BJ (cell line): ENCODE measurements at regions of chr10 and their contacts with region 1.

Region 1: GRCh38 chr10:70221030-70221429 is 12.2 kb downstream of the PPA1 start:
- DNase-seq: no peak
- H3K4me3 ChIP-seq: no peak overlapping the region
- H3K27me3 ChIP-seq: no peaks in the 10 kb centered on the region
- CTCF ChIP-seq: no peak

Region 2: GRCh38 chr10:70125918-70126552 is 95.0 kb before region 1 on chr10:
- CTCF ChIA-PET with region 1: no interaction called
- POLR2A ChIA-PET with region 1: no interaction called
- DNase-seq: no peak
- H3K4me3 ChIP-seq: no peak overlapping the region
- H3K27me3 ChIP-seq: no peaks in the 10 kb centered on the region
- CTCF ChIP-seq: no peak

Region 3: GRCh38 chr10:70137927-70138883 is 82.8 kb before region 1 on chr10:
- CTCF ChIA-PET with region 1: interaction called, 3 read pairs
- POLR2A ChIA-PET with region 1: interaction called, 16 read pairs
- DNase-seq: no peak
- H3K4me3 ChIP-seq: no peak overlapping the region
- H3K27me3 ChIP-seq: no peaks in the 10 kb centered on the region
- CTCF ChIP-seq: no peak

Region 4: DNA sequence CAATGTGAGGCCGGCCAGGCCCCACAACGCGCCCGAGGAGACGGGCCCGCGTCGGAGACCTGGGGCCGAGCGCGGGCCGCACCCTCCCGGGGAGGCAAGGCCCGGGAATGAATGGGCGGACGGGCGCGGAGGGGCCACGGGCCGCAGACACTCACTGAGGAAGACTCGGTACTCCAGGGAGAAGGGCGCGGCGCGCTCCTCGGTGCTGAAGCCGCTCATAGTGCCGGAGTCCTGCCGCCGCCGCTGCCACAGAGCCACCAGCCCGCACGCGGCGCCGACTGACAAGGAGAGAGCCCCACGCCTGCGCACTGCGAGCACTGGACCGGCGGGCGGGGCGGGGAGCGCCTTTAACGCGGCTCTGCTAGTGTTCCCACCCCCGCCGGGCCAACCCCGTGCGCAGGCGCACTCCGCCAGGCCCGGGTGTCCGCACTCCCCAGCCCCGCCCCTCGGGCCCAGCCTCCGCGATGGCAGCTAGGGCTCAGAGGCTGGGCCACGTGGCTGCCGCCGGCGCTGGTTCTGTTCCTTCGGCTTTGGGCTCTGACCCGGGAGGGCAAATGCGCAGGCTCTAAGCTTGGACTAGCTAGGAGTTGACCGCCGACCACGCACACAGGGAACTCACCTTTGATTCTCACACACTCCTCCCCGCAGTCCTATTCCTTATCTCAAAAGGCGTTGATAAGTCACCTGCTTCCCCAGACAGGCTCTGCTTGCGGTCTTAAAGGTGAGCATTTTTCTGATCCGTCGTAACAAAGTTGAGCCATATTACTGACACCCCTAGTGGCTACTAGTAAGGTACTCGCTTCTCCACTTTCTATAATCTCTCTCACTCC is 12.3 kb after region 1 on chr10 and contains the start of gene PPA1:
- CTCF ChIA-PET with region 1: interaction called, 19 read pairs
- POLR2A ChIA-PET with region 1: no interaction called
- DNase-seq: peak; percentile 69
- H3K4me3 ChIP-seq: peak within 1 kb of the TSS; percentile 83
- H3K27me3 ChIP-seq: no peaks in the 10 kb centered on the region
- CTCF ChIP-seq: no peak; the same call in 1 of the 2 replicates
- polyA plus RNA-seq, gene PPA1: 49.8 and 110 TPM in 2 replicates

Region 5: DNA sequence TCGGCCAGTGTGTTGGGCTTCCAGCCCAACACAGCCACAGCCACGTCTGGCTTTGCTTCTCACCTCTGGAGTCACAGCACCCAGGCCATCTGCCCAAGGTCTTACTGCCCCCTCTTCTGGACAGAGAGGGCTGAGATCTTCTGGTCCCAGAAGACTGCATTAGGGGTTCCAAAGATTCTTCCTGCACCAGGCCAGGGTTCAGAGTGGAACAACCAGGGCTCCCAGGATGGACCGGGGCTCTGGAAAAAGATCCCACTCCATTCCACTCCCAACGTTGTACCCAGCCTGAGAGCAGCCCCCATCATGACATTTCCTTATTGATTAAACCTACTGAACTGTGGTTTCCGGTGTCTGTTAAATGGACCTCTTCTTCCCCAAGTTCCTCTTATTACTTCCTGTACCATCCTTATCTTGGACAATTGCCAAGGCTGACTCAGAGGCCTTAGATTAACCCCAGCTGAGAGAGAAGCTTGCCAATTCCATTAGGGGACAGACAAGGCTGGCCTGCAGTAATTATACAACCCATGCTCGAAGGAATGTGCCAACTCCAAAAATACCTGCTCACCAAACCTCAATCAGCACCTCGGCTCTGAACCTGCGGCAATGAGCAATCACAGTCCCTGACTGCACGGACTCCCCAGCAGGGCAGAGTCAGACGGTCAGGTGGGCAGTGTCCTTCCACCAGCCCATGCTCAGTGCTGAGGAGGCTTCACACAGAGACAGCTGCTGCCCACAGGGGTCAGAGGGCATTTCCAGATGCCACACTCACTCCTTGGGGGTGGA is 110.6 kb after region 1 on chr10:
- CTCF ChIA-PET with region 1: interaction called, 14 read pairs
- POLR2A ChIA-PET with region 1: no interaction called
- DNase-seq: peak; percentile 73
- H3K4me3 ChIP-seq: no peak overlapping the region
- H3K27me3 ChIP-seq: no peaks in the 10 kb centered on the region
- CTCF ChIP-seq: peak; percentile 47

Region 6: GRCh38 chr10:70355051-70356021 is 134.3 kb after region 1 on chr10:
- CTCF ChIA-PET with region 1: interaction called, 219 read pairs
- POLR2A ChIA-PET with region 1: no interaction called
- DNase-seq: no peak
- H3K4me3 ChIP-seq: no peak overlapping the region
- H3K27me3 ChIP-seq: no peaks in the 10 kb centered on the region
- CTCF ChIP-seq: no peak